Activated B cell treated with CpG ODN at 0.5 μM for 24 hours (primary cell): ENCODE measurements at regions of chr18 and their contacts with region 1.

Region 1: DNA sequence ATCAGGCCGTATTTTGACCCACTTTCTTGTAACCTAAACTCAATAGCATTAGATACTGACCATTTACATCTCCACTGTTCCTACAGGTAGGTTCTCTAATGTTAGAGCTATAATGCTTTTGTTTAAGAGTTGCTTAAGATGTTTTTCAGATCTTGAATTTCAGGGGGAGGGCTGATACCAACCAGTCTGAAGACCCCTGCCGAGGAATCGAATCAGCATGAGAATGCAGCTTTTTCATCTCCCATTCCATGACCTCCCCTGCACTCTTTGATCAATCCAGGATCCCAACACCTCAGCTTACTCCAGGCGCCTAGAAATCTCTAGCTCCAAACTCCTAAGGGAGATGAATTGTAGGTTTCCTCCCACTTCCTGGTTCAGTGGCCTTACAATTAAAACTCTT is 120.5 kb upstream of the MC4R start:
- DNase-seq: no peak
- ATAC-seq: no peak
- H3K4me3 Mint-ChIP-seq: no peak overlapping the region
- H3K27ac Mint-ChIP-seq: no peak overlapping the region
- H3K4me1 Mint-ChIP-seq: no peaks in the 10 kb centered on the region
- H3K27me3 Mint-ChIP-seq: no peaks in the 10 kb centered on the region
- CTCF ChIP-seq: no peak

Region 2: DNA sequence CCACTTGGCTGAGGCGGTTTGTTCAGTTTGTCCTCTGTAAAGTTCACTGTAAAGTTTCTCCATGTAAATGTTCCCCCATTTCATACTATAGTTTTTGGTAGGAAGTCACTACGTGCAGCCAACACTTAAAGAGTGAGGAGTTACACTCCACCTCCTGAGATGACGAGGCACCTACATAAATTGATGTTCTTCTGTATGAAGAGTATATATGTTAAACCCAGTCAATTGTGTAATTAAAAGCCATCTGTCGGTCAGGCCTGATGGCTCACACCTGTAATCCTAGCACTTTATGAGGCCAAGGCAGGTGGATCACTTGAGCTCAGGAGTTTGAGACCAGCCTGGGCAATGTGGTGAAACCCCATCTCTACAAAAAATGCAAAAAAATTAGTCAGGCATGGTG is 1686.1 kb after region 1 on chr18:
- CTCF ChIA-PET with region 1: no interaction called
- POLR2A ChIA-PET with region 1: interaction called, 11 read pairs
- intact Hi-C with region 1: no loop called
- DNase-seq: no peak
- ATAC-seq: no peak
- H3K4me3 Mint-ChIP-seq: no peak overlapping the region
- H3K27ac Mint-ChIP-seq: no peak overlapping the region
- H3K4me1 Mint-ChIP-seq: peaks cover 12% of the 10 kb centered on the region
- H3K27me3 Mint-ChIP-seq: no peaks in the 10 kb centered on the region
- CTCF ChIP-seq: no peak